ENCODE measurements at regions of chr12 and their contacts with region 1.

Region 1: DNA sequence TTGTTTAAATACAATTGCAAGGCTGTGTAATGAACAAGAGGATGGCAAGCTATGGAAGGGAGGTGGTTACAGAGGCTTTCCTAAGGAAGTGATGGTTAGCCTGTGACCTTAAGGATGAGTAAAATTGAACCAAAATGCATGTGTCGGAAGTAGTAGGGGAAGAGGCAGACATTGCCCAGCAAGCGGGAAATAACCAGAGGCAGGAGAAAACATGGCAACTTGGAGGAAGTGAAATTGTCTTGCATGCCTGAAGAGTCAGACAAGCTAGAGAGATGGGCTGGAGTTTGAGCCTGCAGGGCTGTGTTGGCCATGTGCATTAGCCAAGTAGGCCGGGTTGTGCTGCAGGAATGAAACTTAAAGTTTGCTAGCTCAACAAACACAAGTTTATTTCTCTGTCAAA is 96.2 kb downstream of the BTG1 start:
- DNase-seq: peak; percentile 54
- ATAC-seq: peak; percentile 91
- H3K4me3 ChIP-seq: no peak overlapping the region
- H3K4me3 Mint-ChIP-seq: peak overlapping the region; percentile 20
- H3K27ac ChIP-seq: no peak overlapping the region
- H3K27ac Mint-ChIP-seq: peak overlapping the region; percentile 57
- H3K4me1 ChIP-seq: peaks cover 9 to 10% of the 10 kb centered on the region in 2 donors
- H3K4me1 Mint-ChIP-seq: peaks cover 21% of the 10 kb centered on the region
- H3K27me3 ChIP-seq: no peaks in the 10 kb centered on the region
- H3K27me3 Mint-ChIP-seq: no peaks in the 10 kb centered on the region
- CTCF ChIP-seq: no peak

Region 2: DNA sequence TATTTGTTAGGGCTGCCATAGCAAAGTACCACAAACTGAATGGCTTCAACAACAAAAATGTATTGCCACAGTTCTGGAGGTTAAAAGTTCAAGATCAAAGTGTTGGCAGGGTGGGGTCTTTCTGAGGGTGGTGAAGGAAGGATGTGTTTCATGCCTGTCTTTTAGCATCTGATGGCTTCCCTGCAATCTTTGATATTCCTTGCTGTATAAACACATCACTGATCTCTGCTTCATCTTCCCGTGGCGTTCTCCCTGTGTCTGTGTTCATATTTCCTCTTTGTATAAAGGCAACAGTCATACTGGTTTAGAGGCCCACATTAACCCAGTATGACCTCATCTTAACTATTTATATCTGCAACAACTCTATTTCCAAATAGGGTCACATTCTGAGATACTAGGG is 71.3 kb before region 1 on chr12:
- CTCF ChIA-PET with region 1: no interaction called
- POLR2A ChIA-PET with region 1: no interaction called
- intact Hi-C with region 1: no loop called
- DNase-seq: no peak
- ATAC-seq: no peak
- H3K4me3 ChIP-seq: no peak overlapping the region
- H3K4me3 Mint-ChIP-seq: no peak overlapping the region
- H3K27ac ChIP-seq: no peak overlapping the region
- H3K27ac Mint-ChIP-seq: no peak overlapping the region
- H3K4me1 ChIP-seq: no peaks in the 10 kb centered on the region
- H3K4me1 Mint-ChIP-seq: no peaks in the 10 kb centered on the region
- H3K27me3 ChIP-seq: no peaks in the 10 kb centered on the region
- H3K27me3 Mint-ChIP-seq: no peaks in the 10 kb centered on the region
- CTCF ChIP-seq: no peak

Region 3: GRCh38 chr12:92080911-92081285 is 31.5 kb after region 1 on chr12:
- CTCF ChIA-PET with region 1: no interaction called
- POLR2A ChIA-PET with region 1: no interaction called
- intact Hi-C with region 1: loop called (anchors 5 kb)
- DNase-seq: no peak
- ATAC-seq: no peak
- H3K4me3 ChIP-seq: no peak overlapping the region
- H3K4me3 Mint-ChIP-seq: no peak overlapping the region
- H3K27ac ChIP-seq: no peak overlapping the region
- H3K27ac Mint-ChIP-seq: no peak overlapping the region
- H3K4me1 ChIP-seq: peaks cover 12 to 13% of the 10 kb centered on the region in 2 donors
- H3K4me1 Mint-ChIP-seq: peaks cover 39% of the 10 kb centered on the region
- H3K27me3 ChIP-seq: no peaks in the 10 kb centered on the region
- H3K27me3 Mint-ChIP-seq: no peaks in the 10 kb centered on the region
- CTCF ChIP-seq: no peak

Region 4: GRCh38 chr12:92123780-92124688 is 74.6 kb after region 1 on chr12:
- CTCF ChIA-PET with region 1: no interaction called
- POLR2A ChIA-PET with region 1: no interaction called
- intact Hi-C with region 1: no loop called
- DNase-seq: peak; percentile 51
- ATAC-seq: peak; percentile 15
- H3K4me3 ChIP-seq: peak overlapping the region in 2 of 5 experiments; percentile 7 to 13
- H3K4me3 Mint-ChIP-seq: peak overlapping the region; percentile 8
- H3K27ac ChIP-seq: peak overlapping the region in 1 of 2 donors; percentile 43
- H3K27ac Mint-ChIP-seq: peak overlapping the region; percentile 2
- H3K4me1 ChIP-seq: peaks cover 18 to 20% of the 10 kb centered on the region in 2 donors
- H3K4me1 Mint-ChIP-seq: peaks cover 36% of the 10 kb centered on the region
- H3K27me3 ChIP-seq: no peaks in the 10 kb centered on the region
- H3K27me3 Mint-ChIP-seq: no peaks in the 10 kb centered on the region
- CTCF ChIP-seq: no peak